Activated naive CD4-positive, alpha-beta T cell treated with anti-CD3 and anti-CD28 coated beads for 36 hours (primary cell): ENCODE measurements at regions of chr18 and their contacts with region 1.

Region 1: GRCh38 chr18:59056706-59057492 is 82.8 kb upstream of the SEC11C start:
- DNase-seq: peak; percentile 89
- H3K4me3 Mint-ChIP-seq: no peak overlapping the region
- H3K27ac Mint-ChIP-seq: no peak overlapping the region
- H3K4me1 Mint-ChIP-seq: no peaks in the 10 kb centered on the region
- H3K27me3 Mint-ChIP-seq: peaks cover 6% of the 10 kb centered on the region

Region 2: DNA sequence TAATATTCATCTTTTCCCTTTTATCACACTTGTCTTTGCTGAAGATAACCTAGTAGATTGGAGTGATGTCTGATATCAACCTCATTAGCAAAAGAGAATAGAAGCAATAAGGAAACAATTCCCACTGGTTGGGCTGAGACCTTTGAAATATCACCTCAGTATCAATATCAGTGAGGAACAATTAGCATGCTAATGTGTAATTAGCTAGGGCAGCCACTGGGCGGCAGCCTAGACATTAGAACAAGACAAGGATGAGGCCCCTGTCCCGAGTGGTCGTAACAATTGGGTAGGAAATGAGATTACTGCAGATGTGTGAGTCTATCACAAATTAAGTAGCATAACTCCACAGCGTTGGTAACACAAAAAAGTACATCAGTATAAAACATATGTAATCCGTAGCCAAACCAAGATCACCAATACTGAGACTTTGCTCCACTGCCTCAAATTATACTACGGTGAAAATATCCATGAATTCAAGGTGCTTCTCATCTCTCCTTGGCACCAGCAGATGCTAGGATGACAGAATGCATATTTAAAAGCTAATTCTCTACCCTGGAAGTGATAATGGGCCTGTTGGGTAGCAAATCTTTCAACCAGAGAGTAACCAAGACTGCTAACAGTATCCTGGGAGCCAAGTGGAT is 527.1 kb before region 1 on chr18:
- CTCF ChIA-PET with region 1: no interaction called
- intact Hi-C with region 1: loop called (anchors 5 kb)
- DNase-seq: peak; percentile 80
- H3K4me3 Mint-ChIP-seq: no peak overlapping the region
- H3K27ac Mint-ChIP-seq: no peak overlapping the region
- H3K4me1 Mint-ChIP-seq: peaks cover 20% of the 10 kb centered on the region
- H3K27me3 Mint-ChIP-seq: peaks cover 3% of the 10 kb centered on the region

Region 3: GRCh38 chr18:58781627-58782194 is 275.2 kb before region 1 on chr18:
- CTCF ChIA-PET with region 1: interaction called, 75 read pairs
- intact Hi-C with region 1: loop called (anchors 1 kb)
- DNase-seq: peak; percentile 85
- H3K4me3 Mint-ChIP-seq: no peak overlapping the region
- H3K27ac Mint-ChIP-seq: no peak overlapping the region
- H3K4me1 Mint-ChIP-seq: no peaks in the 10 kb centered on the region
- H3K27me3 Mint-ChIP-seq: peaks cover 21% of the 10 kb centered on the region

Region 4: DNA sequence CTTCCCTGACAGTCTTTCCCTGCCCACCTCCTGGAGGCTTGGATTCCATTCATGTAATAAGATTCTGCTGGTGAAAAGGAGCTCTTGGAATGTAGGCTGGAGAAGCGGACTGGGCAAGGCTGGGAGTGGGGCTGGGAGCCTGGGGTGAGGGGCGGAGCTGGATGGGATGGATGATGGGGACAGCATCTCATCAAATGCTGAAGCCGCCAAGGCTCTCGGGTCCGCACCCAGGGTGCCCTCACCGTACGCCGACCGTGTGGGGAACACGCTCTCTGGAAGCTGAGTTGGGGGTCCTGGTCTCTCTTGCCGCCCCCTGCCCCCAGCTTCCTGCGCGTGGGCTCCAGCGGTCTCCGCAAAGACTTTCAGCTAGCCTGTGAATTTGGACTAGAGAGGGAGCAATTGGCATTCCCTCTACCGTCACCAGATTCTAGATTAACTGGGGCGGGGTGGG is 207.2 kb after region 1 on chr18:
- CTCF ChIA-PET with region 1: no interaction called
- intact Hi-C with region 1: no loop called
- DNase-seq: no peak
- H3K4me3 Mint-ChIP-seq: no peak overlapping the region
- H3K27ac Mint-ChIP-seq: no peak overlapping the region
- H3K4me1 Mint-ChIP-seq: peaks cover 13% of the 10 kb centered on the region
- H3K27me3 Mint-ChIP-seq: peaks cover 76% of the 10 kb centered on the region